GM12878 (cell line): ENCODE measurements at regions of chr12 and their contacts with region 1.

Region 1: DNA sequence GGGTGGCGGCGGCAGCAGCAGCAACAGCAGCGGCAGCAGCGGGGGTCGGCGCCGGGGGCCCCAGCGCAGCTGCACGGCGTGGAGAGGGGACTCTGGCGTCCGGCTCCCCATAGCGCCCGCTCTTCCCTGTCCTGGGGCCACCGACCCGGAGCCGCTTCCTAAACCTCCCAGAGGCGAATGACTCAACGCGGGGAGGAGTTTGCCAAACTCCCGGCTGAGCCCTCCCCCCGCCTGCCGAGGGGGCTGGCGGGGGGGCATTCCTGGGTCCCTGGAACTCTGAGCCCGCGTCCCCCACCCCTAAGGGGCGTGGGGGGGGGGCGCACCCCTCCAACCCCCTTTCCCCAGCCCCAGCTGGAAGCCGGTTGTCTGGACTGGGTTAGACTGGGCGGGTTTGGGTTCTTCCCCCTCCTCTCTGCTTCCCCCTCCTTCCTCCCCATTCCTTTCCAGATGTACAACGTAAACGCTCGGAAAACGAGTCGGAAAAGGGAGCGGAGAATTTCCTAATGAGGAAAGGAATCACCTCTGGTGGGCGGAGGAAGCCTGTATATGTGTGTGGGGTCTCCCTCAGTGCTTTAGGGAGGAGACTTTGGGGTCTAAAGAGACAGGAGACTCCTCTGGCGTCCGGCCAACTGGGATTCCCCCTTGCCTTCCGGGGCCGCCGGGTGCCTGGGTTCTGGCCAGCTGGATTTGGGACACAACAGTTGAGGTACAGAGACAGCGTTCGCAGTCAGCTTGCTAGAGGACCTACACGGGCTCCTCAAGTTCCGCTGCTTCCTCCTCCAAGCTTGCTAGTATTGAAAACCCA is at the start of gene ITGA5:
- DNase-seq: no peak
- ATAC-seq: peak; percentile 16
- H3K4me3 ChIP-seq: peak within 1 kb of the TSS; percentile 32; the same call in 1 of the 2 replicates
- H3K27ac ChIP-seq: no peak within 1 kb of the TSS
- H3K4me1 ChIP-seq: no peaks in the 10 kb centered on the region
- H3K27me3 ChIP-seq: peaks cover 4 to 16% of the 10 kb centered on the region in 2 experiments
- CTCF ChIP-seq: no peak
- EP300 ChIP-seq: no peak
- POLR2A ChIP-seq: no peak
- RAD21 ChIP-seq: no peak
- polyA plus RNA-seq, gene ITGA5: 0.15 to 0.31 TPM

Region 2: GRCh38 chr12:54431911-54432814 is 12.9 kb after region 1 on chr12:
- CTCF ChIA-PET with region 1: interaction called, 150 read pairs
- POLR2A ChIA-PET with region 1: interaction called, 41 read pairs
- RAD21 ChIA-PET with region 1: interaction called, 34 read pairs
- SMC1A ChIA-PET with region 1: interaction called, 69 read pairs
- in situ Hi-C with region 1: no loop called
- intact Hi-C with region 1: no loop called
- DNase-seq: no peak
- ATAC-seq: no peak
- H3K4me3 ChIP-seq: no peak overlapping the region
- H3K27ac ChIP-seq: no peak overlapping the region
- H3K4me1 ChIP-seq: peaks cover 5% of the 10 kb centered on the region
- H3K27me3 ChIP-seq: peaks cover 0 to 5% of the 10 kb centered on the region in 2 experiments; a peak in 2 of 4 replicates
- CTCF ChIP-seq: no peak
- EP300 ChIP-seq: no peak
- POLR2A ChIP-seq: no peak
- RAD21 ChIP-seq: no peak

Region 3: DNA sequence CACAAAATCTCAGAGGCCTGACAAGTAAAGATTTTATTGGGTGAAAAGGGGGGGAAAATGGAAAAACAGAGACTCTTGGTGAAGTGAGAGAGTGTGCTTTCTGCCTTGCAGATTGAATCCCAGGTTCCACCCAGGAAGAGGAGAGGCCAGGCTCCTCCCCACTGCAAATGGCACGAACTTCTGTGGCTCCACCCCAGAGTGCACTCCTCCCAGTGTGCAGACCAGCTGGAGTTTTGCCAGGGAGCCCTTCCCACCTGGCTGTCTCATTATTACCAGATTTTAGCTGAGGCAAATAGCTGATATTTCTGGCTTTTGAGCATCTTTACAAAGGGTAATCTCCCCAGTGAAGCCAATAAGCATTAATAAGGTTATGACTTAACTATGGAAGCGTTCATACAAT is 513.4 kb after region 1 on chr12:
- CTCF ChIA-PET with region 1: no interaction called
- POLR2A ChIA-PET with region 1: no interaction called
- RAD21 ChIA-PET with region 1: no interaction called
- SMC1A ChIA-PET with region 1: no interaction called
- in situ Hi-C with region 1: no loop called
- intact Hi-C with region 1: no loop called
- DNase-seq: no peak
- ATAC-seq: no peak
- H3K4me3 ChIP-seq: no peak overlapping the region
- H3K27ac ChIP-seq: no peak overlapping the region
- H3K4me1 ChIP-seq: peaks cover 5% of the 10 kb centered on the region
- H3K27me3 ChIP-seq: no peaks in the 10 kb centered on the region
- CTCF ChIP-seq: no peak
- EP300 ChIP-seq: no peak
- POLR2A ChIP-seq: no peak
- RAD21 ChIP-seq: no peak

Region 4: GRCh38 chr12:55262587-55262986 is 843.3 kb after region 1 on chr12:
- CTCF ChIA-PET with region 1: no interaction called
- POLR2A ChIA-PET with region 1: no interaction called
- RAD21 ChIA-PET with region 1: no interaction called
- SMC1A ChIA-PET with region 1: no interaction called
- in situ Hi-C with region 1: no loop called
- intact Hi-C with region 1: no loop called
- DNase-seq: no peak
- ATAC-seq: no peak
- H3K4me3 ChIP-seq: no peak overlapping the region
- H3K27ac ChIP-seq: no peak overlapping the region
- H3K4me1 ChIP-seq: no peaks in the 10 kb centered on the region
- H3K27me3 ChIP-seq: no peaks in the 10 kb centered on the region
- CTCF ChIP-seq: no peak
- EP300 ChIP-seq: no peak
- POLR2A ChIP-seq: no peak
- RAD21 ChIP-seq: no peak